ENCODE measurements at regions of chr1 and their contacts with region 1.

Region 1: GRCh38 chr1:75124510-75124909 is 9.7 kb upstream of the LHX8 start:
- DNase-seq: no peak
- H3K4me3 Mint-ChIP-seq: no peak overlapping the region
- H3K27ac Mint-ChIP-seq: no peak overlapping the region
- H3K4me1 Mint-ChIP-seq: peaks cover 2% of the 10 kb centered on the region
- H3K27me3 Mint-ChIP-seq: peaks cover 37% of the 10 kb centered on the region

Region 2: DNA sequence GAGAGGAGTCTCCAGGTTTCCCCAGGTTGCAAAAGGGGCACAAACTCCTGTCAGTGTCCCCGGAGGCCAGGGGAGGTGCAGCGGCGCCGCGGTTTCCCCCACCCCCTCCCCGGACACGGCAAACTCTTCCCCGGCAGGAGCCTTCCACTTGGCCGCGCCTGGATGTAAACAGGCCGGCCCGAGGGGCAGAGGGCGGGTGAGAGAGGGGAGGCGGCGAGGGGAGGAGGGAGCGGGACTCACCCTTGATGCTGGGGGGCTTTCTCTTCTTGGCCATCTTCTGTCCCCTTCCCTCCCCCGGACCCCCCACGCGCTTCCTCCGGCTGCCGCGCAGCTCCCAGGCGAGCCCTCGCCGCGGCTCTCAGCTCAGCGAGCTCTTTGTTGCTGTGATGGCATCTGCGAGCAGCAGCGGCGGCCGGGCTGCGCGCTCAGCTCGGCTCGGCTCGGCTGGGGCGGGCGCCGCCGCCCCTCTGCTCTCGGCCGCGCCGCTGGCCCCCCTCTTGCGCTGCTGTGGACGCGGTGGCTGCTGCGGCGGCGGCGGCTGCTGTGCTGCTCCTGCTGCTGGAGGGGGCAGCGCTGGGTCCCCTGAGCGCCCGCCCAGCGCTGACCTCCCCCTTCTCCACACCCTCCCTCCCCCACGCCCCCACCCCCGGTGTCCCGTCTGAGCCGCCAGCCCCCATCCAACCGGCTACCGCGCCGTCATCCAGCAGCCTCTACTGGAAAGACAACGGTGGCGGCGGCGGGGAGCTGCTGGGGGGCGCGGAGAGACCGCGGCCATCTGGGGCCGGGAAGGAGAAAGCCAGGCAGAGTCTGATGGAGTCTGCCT is 491.3 kb after region 1 on chr1:
- intact Hi-C with region 1: loop called (anchors 5 kb)
- DNase-seq: no peak
- H3K4me3 Mint-ChIP-seq: peak overlapping the region; percentile 54
- H3K27ac Mint-ChIP-seq: no peak overlapping the region
- H3K4me1 Mint-ChIP-seq: peaks cover 3% of the 10 kb centered on the region
- H3K27me3 Mint-ChIP-seq: peaks cover 68% of the 10 kb centered on the region